ENCODE measurements at regions of chr7 and their contacts with region 1.

Region 1: DNA sequence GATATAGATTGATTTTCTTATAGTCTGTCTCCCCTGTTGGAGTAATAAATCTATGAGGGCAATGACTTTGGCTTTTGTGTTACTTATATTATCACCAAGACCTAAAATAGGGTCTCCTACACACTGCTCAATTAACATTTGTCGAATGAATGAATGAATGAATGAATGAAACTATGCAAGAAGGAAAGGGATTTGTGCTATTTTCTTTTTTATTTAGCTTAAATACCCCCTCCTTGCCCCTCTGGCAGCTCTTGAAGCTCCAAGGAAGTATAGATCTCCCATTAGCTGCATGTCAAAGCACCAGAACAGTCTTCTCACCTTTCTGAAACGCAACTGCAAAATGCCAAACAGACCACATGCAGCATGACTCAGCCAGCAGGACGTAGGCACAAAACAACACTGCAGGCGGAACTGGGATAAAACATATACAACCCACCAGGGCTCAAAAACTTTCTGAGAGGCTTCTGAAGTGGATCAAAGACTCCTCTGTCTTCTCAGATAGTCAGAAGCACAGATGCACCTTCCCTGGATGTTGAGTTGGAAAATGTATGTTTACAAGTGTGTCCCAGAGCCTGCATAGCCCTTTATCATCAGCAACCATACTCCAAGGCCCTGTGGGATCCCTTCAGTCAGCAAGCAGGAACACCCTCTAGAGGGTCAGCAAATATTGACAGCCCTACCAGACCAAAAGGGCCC is 187.8 kb downstream of the NPSR1 start:
- DNase-seq: no peak
- ATAC-seq: no peak
- H3K4me3 ChIP-seq: no peak overlapping the region
- H3K27ac ChIP-seq: no peak overlapping the region
- H3K4me1 ChIP-seq: no peaks in the 10 kb centered on the region
- H3K27me3 ChIP-seq: no peaks in the 10 kb centered on the region
- CTCF ChIP-seq: no peak

Region 2: GRCh38 chr7:34747867-34748727 is 97.7 kb before region 1 on chr7:
- intact Hi-C with region 1: no loop called
- DNase-seq: peak; percentile 85 to 92 (median 89)
- ATAC-seq: peak; percentile 93 to 97 (median 95)
- H3K4me3 ChIP-seq: no peak overlapping the region
- H3K27ac ChIP-seq: peak overlapping the region; percentile 14 to 76 (median 62)
- H3K4me1 ChIP-seq: peaks cover 4 to 26% (median 18%) of the 10 kb centered on the region in 3 donors
- H3K27me3 ChIP-seq: no peaks in the 10 kb centered on the region
- CTCF ChIP-seq: no peak

Region 3: DNA sequence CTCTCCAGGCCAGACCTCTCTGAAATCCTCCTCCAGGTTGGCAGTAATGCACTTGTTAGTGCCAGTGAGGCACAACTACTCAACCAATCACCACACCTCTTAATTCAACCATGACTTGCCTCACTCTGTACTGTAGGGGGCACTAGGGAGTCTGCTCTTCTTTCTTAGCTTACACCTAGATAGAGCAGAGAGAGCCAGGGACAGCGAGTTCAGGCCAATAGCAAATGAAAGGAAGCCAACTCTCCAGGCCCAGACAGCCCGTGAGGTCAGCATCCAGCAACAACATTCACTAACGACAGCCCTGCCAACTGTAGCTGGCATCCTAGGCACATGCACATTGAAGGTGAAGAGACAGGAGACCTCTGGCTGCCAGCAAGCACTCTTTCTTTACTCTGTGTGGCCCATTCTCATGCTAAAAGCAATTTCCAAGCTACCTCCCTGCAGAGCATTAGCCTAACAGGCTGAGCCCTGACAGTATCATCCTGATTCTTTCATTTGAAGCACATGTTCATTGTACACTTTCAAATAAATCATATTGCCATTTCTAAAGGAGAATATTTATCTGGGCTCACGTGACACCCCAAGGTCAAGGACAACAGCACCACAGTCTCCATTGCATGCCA is 55.2 kb after region 1 on chr7:
- intact Hi-C with region 1: loop called in 1 of 3 experiments (anchors 10 kb)
- DNase-seq: no peak
- ATAC-seq: no peak
- H3K4me3 ChIP-seq: no peak overlapping the region
- H3K27ac ChIP-seq: no peak overlapping the region
- H3K4me1 ChIP-seq: no peaks in the 10 kb centered on the region
- H3K27me3 ChIP-seq: no peaks in the 10 kb centered on the region
- CTCF ChIP-seq: no peak

Measured in pancreas (tissue), 10 donors.